ENCODE measurements at regions of chr16 and their contacts with region 1.

Region 1: GRCh38 chr16:64004116-64004515 is 1117.7 kb downstream of the CDH11 start:
- H3K4me3 Mint-ChIP-seq: no peak overlapping the region
- H3K27ac Mint-ChIP-seq: no peak overlapping the region
- H3K4me1 Mint-ChIP-seq: no peaks in the 10 kb centered on the region
- H3K27me3 Mint-ChIP-seq: no peaks in the 10 kb centered on the region

Region 2: DNA sequence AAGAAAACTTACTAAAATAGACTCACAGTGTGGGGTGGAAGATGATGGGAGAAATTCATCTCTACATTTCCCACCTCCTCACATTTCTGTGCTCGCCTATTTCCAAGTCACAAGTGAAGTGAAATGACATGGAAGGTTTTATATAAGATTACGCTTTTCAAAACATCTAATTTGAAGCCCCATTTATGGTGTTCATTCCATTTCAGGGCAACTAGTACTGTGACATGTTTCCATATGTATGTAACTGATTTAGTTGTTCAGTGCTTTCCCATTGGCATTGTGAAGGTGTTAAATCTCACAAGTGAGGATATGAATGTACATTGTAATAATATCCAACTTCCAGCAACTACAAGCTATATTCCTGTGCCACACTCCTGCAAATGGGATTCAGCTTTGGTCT is 57.1 kb before region 1 on chr16:
- intact Hi-C with region 1: no loop called
- H3K4me3 Mint-ChIP-seq: no peak overlapping the region
- H3K27ac Mint-ChIP-seq: no peak overlapping the region
- H3K4me1 Mint-ChIP-seq: no peaks in the 10 kb centered on the region
- H3K27me3 Mint-ChIP-seq: no peaks in the 10 kb centered on the region

Region 3: DNA sequence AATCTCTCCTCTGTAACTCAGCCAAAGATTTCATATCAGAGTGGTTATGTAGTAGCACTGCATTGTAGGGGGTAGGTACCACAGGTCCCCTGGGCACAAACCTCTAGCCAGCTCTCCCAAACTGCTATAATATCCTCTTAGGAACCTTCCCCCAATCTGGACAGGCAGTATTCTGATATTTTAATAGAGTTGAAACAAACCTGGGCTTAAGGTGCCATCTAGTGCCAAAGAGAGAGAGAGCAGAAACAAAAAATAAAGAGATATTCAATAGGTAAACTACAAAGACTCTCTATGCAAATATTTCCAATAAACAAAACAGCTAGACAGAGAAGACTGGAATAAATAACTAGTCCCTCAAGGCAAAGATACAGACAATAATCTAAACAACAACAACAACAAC is 47.7 kb after region 1 on chr16:
- intact Hi-C with region 1: loop called (anchors 5 kb)
- H3K4me3 Mint-ChIP-seq: no peak overlapping the region
- H3K27ac Mint-ChIP-seq: no peak overlapping the region
- H3K4me1 Mint-ChIP-seq: no peaks in the 10 kb centered on the region
- H3K27me3 Mint-ChIP-seq: no peaks in the 10 kb centered on the region

Measured in dendritic cell treated with granulocyte-macrophage colony-stimulating factor and Interleukin-4, amounts not matched to agents 40 ng/mL and 50 ng/mL, for 4 days (primary cell).